Activated CD4-positive, alpha-beta memory T cell treated with anti-CD3 and anti-CD28 coated beads, Interleukin-2, amount 10 ng/mL, durations not matched to agents 7 days and 5 days (primary cell): ENCODE measurements at regions of chr10 and their contacts with region 1.

Region 1: GRCh38 chr10:17425584-17426262 is 28.7 kb downstream of the ST8SIA6 start:
- DNase-seq: peak; percentile 66
- H3K4me3 Mint-ChIP-seq: no peak overlapping the region
- H3K27ac Mint-ChIP-seq: peak overlapping the region; percentile 92
- H3K4me1 Mint-ChIP-seq: peaks cover 76% of the 10 kb centered on the region
- H3K27me3 Mint-ChIP-seq: peaks cover 1% of the 10 kb centered on the region

Region 2: GRCh38 chr10:17409170-17409733 is 16.5 kb before region 1 on chr10:
- CTCF ChIA-PET with region 1: interaction called, 114 read pairs
- POLR2A ChIA-PET with region 1: interaction called, 13 read pairs
- DNase-seq: no peak
- H3K4me3 Mint-ChIP-seq: no peak overlapping the region
- H3K27ac Mint-ChIP-seq: no peak overlapping the region
- H3K4me1 Mint-ChIP-seq: peaks cover 10% of the 10 kb centered on the region
- H3K27me3 Mint-ChIP-seq: peaks cover 6% of the 10 kb centered on the region